ENCODE measurements at regions of chr9 and their contacts with region 1.

Region 1: DNA sequence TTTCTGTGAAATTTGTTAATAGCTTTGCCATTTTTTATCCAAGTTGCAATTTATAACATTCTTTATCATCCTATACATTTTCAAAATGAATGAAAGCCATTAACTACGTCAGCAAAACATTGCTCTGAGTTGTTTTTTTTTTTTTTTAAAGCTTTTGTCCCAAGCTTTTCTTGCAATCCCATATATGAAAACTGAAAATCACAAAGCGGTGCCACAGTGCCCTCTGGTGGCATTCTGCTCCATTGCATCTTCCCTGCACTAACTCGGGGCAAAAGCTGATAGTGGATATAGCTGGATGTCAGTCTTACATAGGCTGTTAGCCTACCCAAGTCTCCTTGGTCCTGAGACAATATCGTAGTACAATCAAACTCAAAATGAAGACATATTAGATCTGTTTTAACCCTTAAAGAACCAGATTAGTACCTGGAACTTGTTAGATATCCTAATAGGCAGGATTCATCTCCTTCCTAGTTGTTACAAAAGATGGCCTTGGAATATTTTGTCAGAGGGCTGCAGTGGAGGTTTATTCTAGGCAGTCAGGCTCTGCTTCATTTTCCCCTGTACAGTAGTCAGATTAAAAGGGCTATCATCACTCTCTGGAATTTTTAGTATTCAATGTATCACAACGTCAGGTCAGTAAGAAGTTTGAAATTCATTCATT is 669.9 kb downstream of the PTPRD start:
- DNase-seq: peak; percentile 71
- ATAC-seq: no peak
- H3K4me3 Mint-ChIP-seq: no peak overlapping the region
- H3K27ac Mint-ChIP-seq: no peak overlapping the region
- H3K4me1 Mint-ChIP-seq: no peaks in the 10 kb centered on the region
- H3K27me3 Mint-ChIP-seq: no peaks in the 10 kb centered on the region

Region 2: GRCh38 chr9:9341203-9341602 is 601.7 kb before region 1 on chr9:
- CTCF ChIA-PET with region 1: no interaction called
- POLR2A ChIA-PET with region 1: no interaction called
- intact Hi-C with region 1: loop called in 1 of 2 experiments (anchors 10 kb)
- DNase-seq: no peak
- ATAC-seq: no peak
- H3K4me3 Mint-ChIP-seq: no peak overlapping the region
- H3K27ac Mint-ChIP-seq: no peak overlapping the region
- H3K4me1 Mint-ChIP-seq: no peaks in the 10 kb centered on the region
- H3K27me3 Mint-ChIP-seq: no peaks in the 10 kb centered on the region

Region 3: GRCh38 chr9:9603345-9603744 is 339.5 kb before region 1 on chr9:
- CTCF ChIA-PET with region 1: interaction called, 10 read pairs
- POLR2A ChIA-PET with region 1: no interaction called
- intact Hi-C with region 1: loop called (anchors 2 to 10 kb)
- DNase-seq: no peak
- ATAC-seq: no peak
- H3K4me3 Mint-ChIP-seq: no peak overlapping the region
- H3K27ac Mint-ChIP-seq: no peak overlapping the region
- H3K4me1 Mint-ChIP-seq: no peaks in the 10 kb centered on the region
- H3K27me3 Mint-ChIP-seq: no peaks in the 10 kb centered on the region

Region 4: GRCh38 chr9:9881699-9882098 is 61.2 kb before region 1 on chr9:
- CTCF ChIA-PET with region 1: no interaction called
- POLR2A ChIA-PET with region 1: no interaction called
- intact Hi-C with region 1: loop called in 1 of 2 experiments (anchors 10 kb)
- DNase-seq: no peak
- ATAC-seq: no peak
- H3K4me3 Mint-ChIP-seq: no peak overlapping the region
- H3K27ac Mint-ChIP-seq: no peak overlapping the region
- H3K4me1 Mint-ChIP-seq: no peaks in the 10 kb centered on the region
- H3K27me3 Mint-ChIP-seq: no peaks in the 10 kb centered on the region